Transverse colon (tissue), 4 donors: ENCODE measurements at regions of chr17 and their contacts with region 1.

Region 1: DNA sequence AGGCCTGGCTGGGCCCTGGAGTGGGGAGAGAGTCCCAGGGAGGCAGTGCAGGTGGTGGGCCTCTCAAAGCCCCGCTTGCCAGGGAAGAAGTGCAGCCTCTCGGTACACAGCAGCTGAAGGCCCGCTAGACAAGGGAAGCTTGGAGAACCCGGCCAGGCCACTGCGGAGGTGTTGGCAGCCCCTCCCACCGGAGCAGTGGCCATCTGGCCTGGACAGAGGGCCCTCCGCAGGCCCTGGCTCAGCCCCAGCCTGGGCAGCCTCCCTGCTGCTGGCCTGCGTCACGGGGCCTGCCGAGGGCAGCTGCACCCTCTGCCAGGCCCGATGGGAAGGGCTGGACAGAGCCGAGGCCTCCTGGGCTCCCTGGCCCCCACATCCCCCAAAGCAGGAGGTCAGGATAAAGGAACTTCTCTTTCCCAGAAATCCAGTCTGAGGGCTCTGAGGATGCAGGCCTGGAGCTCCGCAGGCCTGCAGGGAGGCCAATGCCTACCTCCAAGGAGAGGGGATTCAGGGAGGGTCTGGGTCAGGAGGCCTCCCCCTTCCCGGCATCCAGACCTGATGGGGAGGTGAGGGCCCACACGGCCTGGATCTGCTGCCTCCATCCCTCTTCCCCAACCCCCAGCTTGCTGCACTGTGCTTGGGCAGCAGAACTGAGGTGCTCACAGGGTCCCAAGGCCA is 4.3 kb downstream of the SPPL2C start:
- DNase-seq: no peak
- H3K4me3 ChIP-seq: no peak overlapping the region
- H3K27ac ChIP-seq: no peak overlapping the region
- H3K4me1 ChIP-seq: no peaks in the 10 kb centered on the region
- H3K27me3 ChIP-seq: peaks cover 17% of the 10 kb centered on the region
- CTCF ChIP-seq: no peak
- EP300 ChIP-seq: no peak
- POLR2A ChIP-seq: no peak

Region 2: GRCh38 chr17:45631941-45632340 is 217.1 kb before region 1 on chr17:
- in situ Hi-C with region 1: no loop called
- intact Hi-C with region 1: loop called (anchors 5 kb)
- DNase-seq: no peak
- H3K4me3 ChIP-seq: no peak overlapping the region
- H3K27ac ChIP-seq: no peak overlapping the region
- H3K4me1 ChIP-seq: no peaks in the 10 kb centered on the region
- H3K27me3 ChIP-seq: no peaks in the 10 kb centered on the region
- CTCF ChIP-seq: no peak
- EP300 ChIP-seq: no peak
- POLR2A ChIP-seq: no peak

Region 3: DNA sequence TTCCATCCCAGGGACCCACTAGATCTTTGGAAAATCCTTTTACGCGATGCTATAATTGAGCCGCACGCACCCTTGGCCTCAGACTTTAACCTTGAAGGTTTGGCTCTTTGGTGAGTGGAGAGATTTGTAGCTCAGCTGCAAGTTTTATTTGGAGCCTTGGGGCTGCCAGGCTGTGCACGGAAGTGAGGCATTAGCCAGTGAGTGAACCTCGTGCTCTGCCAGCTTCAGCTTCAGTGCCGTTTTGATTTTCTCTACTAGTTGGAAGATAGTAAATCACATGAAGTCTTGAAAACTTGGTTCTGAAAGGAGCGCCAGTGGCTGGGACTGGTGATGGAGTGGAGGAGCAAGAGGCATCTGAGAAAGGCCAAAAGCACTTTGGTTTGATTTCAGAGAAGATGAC is 47.6 kb before region 1 on chr17:
- in situ Hi-C with region 1: no loop called
- intact Hi-C with region 1: no loop called
- DNase-seq: no peak
- H3K4me3 ChIP-seq: no peak overlapping the region
- H3K27ac ChIP-seq: no peak overlapping the region
- H3K4me1 ChIP-seq: no peaks in the 10 kb centered on the region
- H3K27me3 ChIP-seq: peaks cover 40% of the 10 kb centered on the region
- CTCF ChIP-seq: no peak
- EP300 ChIP-seq: no peak
- POLR2A ChIP-seq: no peak

Region 4: DNA sequence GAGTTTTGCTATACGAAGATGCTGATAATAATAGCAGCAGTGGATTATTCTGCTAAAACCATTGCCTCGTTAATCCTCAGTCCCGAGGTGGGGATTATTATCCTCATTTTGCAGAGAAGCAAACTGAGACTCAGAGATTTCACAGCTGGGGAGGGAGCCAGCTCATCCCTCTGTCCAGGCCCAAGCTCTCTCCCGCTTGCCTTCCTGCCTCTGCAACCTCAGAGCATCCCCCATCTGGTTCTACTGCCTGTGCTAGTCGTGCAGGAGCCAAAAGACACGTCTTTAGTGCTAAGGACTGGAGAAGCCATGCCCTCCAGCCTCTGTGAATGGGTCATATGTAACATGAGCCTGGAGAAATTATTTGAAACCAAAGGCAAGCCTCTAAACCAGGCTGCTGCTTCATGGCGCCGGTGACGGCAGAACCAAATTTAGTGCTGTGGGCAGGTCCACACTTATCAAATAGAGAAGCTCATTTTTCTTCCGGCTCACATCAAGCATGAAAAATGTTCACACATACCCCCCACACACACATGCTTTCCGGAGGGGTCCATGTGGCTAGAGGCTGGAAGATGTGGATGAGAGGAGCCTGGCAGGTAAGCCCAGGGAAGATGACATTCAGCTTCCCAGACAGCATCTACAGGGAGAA is 58.9 kb after region 1 on chr17:
- in situ Hi-C with region 1: no loop called
- intact Hi-C with region 1: no loop called
- DNase-seq: no peak
- H3K4me3 ChIP-seq: no peak overlapping the region
- H3K27ac ChIP-seq: no peak overlapping the region
- H3K4me1 ChIP-seq: no peaks in the 10 kb centered on the region
- H3K27me3 ChIP-seq: peaks cover 27% of the 10 kb centered on the region
- CTCF ChIP-seq: no peak
- EP300 ChIP-seq: no peak
- POLR2A ChIP-seq: no peak

Region 5: GRCh38 chr17:46121841-46122485 is 273.0 kb after region 1 on chr17:
- in situ Hi-C with region 1: no loop called
- intact Hi-C with region 1: no loop called
- DNase-seq: no peak
- H3K4me3 ChIP-seq: no peak overlapping the region
- H3K27ac ChIP-seq: no peak overlapping the region
- H3K4me1 ChIP-seq: peaks cover 14 to 79% (median 38%) of the 10 kb centered on the region in 4 donors
- H3K27me3 ChIP-seq: no peaks in the 10 kb centered on the region
- CTCF ChIP-seq: no peak
- EP300 ChIP-seq: no peak
- POLR2A ChIP-seq: no peak

Region 6: DNA sequence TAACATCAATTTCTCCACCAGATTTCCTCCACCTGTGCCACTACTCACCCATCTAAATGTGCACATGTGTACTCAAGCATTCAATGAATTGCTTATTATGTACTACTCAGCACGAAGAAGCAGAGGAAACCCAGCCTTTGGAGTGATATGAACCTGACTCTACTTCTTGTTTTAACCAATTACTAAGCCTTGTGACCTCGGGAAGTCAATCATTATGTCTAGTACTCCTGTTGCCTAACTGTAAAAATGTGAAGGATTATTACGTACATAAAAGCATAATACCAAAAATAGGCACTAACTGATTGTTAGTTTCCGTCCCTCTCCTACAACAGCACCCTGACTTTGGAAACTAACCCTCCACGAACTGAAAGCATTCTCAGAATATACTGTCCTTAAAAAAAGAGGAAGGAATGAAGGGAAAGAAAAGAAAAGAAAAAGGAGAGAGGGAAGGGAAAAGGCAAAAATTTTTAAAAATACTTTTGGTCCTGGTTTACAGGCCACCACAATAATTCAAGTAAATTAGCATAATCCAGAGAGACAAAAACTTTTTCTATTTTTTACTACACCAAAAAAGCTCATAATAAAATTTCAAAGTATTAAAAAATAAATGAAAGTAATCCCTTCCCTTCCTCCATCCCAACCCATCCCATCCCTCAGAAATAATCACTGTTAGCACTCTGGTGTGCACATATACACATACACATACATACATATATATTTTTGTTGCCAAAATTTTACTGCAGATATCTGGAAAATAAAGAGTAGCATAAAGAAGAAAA is 290.6 kb after region 1 on chr17:
- in situ Hi-C with region 1: no loop called
- intact Hi-C with region 1: no loop called
- DNase-seq: no peak
- H3K4me3 ChIP-seq: no peak overlapping the region
- H3K27ac ChIP-seq: no peak overlapping the region
- H3K4me1 ChIP-seq: peaks cover 16 to 75% (median 42%) of the 10 kb centered on the region in 4 donors
- H3K27me3 ChIP-seq: no peaks in the 10 kb centered on the region
- CTCF ChIP-seq: no peak
- EP300 ChIP-seq: no peak
- POLR2A ChIP-seq: no peak